CD4-positive, alpha-beta memory T cell (primary cell): ENCODE measurements at regions of chr14 and their contacts with region 1.

Region 1: GRCh38 chr14:75906676-75907280 is 75.0 kb downstream of the TGFB3 start:
- DNase-seq: peak; percentile 48 to 64 (median 54)
- H3K4me3 ChIP-seq: no peak overlapping the region
- H3K4me3 Mint-ChIP-seq: no peak overlapping the region
- H3K27ac ChIP-seq: no peak overlapping the region
- H3K27ac Mint-ChIP-seq: peak overlapping the region in 2 of 7 donors; percentile 3 to 15
- H3K4me1 ChIP-seq: no peaks in the 10 kb centered on the region
- H3K4me1 Mint-ChIP-seq: no peaks in the 10 kb centered on the region
- H3K27me3 ChIP-seq: no peaks in the 10 kb centered on the region
- H3K27me3 Mint-ChIP-seq: no peaks in the 10 kb centered on the region

Region 2: DNA sequence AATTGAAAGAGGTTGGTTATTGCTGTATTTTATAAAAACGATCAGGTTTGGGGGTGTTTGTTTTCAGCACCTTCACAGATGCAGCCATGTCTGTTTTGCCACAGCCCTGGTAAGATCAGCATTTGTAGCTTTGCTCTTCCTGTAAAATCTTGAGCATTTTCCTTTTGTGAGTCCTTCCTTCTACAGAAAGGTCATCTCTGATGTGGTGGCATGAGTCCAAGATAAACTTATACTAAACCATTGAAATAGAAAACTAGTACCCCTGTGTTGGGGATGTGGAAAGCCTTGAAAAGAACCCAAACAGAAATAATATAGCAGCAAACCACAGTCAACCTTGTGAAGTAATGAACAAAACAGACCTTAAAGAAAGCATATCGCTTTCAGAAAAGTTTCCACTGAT is 10.4 kb before region 1 on chr14:
- CTCF ChIA-PET with region 1: interaction called, 13 read pairs
- POLR2A ChIA-PET with region 1: no interaction called
- intact Hi-C with region 1: no loop called
- DNase-seq: no peak
- H3K4me3 ChIP-seq: no peak overlapping the region
- H3K4me3 Mint-ChIP-seq: no peak overlapping the region
- H3K27ac ChIP-seq: no peak overlapping the region
- H3K27ac Mint-ChIP-seq: peak overlapping the region in 2 of 7 donors; percentile 19 to 25
- H3K4me1 ChIP-seq: no peaks in the 10 kb centered on the region
- H3K4me1 Mint-ChIP-seq: peaks cover 0 to 4% (median 0%) of the 10 kb centered on the region in 4 donors
- H3K27me3 ChIP-seq: no peaks in the 10 kb centered on the region
- H3K27me3 Mint-ChIP-seq: no peaks in the 10 kb centered on the region

Region 3: DNA sequence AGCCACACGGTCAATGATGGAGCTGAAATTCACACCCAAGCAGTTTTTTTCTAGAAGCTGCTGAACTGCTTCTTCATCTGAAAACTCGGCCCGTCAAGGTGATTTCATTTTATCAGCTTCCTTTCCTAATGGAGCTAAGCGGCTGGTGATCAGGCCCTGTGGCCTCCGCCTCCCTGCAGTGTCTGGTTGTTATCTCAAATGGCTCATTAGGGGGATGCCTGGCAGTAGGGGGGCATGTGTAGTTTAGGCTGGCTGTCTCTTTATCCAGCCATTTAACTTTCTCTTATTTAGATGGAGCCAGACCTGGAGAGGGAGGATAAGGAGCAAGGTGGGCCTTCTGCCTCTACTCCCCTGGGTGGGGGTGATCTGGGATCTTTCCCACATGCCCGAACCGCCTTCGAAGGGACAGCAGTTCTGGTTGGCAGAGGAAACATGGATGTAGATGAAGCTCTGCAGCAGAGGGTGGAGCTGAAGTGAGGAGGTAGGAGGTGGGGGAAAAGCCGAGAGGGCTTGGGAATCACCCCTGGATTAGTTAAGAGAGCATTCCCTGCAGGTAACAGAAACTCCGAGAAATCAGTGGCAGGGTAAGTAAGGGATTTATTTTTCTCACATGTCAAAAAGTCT is 10.7 kb after region 1 on chr14:
- CTCF ChIA-PET with region 1: interaction called, 25 read pairs
- POLR2A ChIA-PET with region 1: no interaction called
- intact Hi-C with region 1: no loop called
- DNase-seq: no peak
- H3K4me3 ChIP-seq: no peak overlapping the region
- H3K4me3 Mint-ChIP-seq: no peak overlapping the region
- H3K27ac ChIP-seq: no peak overlapping the region
- H3K27ac Mint-ChIP-seq: no peak overlapping the region
- H3K4me1 ChIP-seq: no peaks in the 10 kb centered on the region
- H3K4me1 Mint-ChIP-seq: no peaks in the 10 kb centered on the region
- H3K27me3 ChIP-seq: no peaks in the 10 kb centered on the region
- H3K27me3 Mint-ChIP-seq: no peaks in the 10 kb centered on the region

Region 4: DNA sequence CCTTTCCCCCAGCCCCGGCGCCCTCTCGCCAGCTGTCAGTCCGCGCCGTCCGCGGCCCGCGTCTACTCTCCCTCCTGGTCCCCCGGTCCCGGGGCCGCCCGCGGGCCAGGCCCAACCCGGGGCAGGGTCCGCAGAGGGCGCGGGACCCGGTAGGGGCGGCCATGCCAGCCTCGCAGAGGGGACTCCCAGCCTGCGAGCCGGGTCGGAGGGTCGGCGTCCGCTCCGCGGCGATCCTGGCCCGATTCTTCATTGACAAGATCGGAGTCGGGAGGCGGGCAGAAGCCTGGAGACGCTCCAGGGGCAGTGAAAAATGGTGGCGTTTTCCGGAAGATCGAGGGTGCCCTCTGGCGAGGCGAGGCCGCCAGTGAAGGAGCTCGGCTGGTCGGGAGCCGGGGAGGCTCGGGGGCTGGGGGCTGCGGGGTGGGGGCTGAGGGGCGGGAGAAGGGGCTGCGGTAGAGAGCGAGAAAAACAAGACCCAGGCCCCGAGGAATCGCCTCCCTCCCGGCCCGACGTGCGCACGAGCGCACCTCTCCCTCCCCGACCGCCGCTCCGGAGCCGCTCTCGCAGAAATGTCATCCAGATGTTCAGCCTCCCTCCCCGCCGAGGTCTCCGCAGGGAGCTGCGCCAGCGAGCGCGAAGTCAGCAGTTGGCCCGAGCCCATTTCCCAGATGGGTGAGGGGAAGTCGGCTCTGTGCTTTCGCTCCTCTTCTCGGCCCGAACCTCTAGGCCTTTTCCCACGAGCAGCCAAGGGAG is 75.7 kb after region 1 on chr14:
- CTCF ChIA-PET with region 1: interaction called, 181 read pairs
- POLR2A ChIA-PET with region 1: interaction called, 13 read pairs
- intact Hi-C with region 1: no loop called
- DNase-seq: peak; percentile 79 to 82 (median 80)
- H3K4me3 ChIP-seq: peak overlapping the region; percentile 29 to 72
- H3K4me3 Mint-ChIP-seq: peak overlapping the region; percentile 78 to 93 (median 89)
- H3K27ac ChIP-seq: peak overlapping the region; percentile 71
- H3K27ac Mint-ChIP-seq: peak overlapping the region; percentile 78 to 95 (median 93)
- H3K4me1 ChIP-seq: peaks cover 44% of the 10 kb centered on the region
- H3K4me1 Mint-ChIP-seq: peaks cover 27 to 68% (median 50%) of the 10 kb centered on the region in 4 donors
- H3K27me3 ChIP-seq: no peaks in the 10 kb centered on the region
- H3K27me3 Mint-ChIP-seq: no peaks in the 10 kb centered on the region

Region 5: DNA sequence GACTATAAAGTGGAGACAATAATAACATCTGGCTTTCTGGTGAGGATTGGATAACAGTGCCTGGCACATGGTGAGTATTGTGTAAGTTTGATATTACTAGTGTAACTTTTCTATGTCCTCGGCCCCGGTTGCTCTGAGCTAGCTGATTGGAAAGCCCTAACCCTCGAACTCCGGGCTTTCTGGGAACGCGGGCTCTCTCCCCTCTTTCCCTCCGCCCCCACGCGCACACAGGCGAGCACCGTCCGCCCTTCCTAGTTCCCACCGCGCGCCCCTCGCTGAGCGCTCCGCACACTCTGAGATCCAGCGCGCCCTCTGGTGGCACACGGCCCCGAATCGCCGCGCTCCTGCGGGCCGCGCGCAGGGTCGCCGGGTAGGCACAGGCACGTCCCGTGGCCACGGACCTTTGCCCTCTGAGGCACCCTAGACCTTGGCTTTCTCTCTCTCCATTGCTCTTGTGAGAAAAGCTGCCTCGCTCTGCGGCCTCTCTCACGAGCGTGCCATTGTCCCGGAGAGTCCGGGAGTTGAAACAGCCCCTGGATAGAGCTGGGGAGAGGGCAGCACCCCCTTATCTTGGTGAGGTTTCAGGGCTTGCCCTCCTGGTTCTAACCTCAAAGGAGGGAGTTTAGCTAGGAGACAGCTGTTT is 446.0 kb after region 1 on chr14:
- CTCF ChIA-PET with region 1: interaction called, 4 read pairs
- POLR2A ChIA-PET with region 1: no interaction called
- intact Hi-C with region 1: loop called (anchors 2 kb)
- DNase-seq: peak in 4 of 5 donors; percentile 13 to 41 (median 28)
- H3K4me3 ChIP-seq: no peak overlapping the region
- H3K4me3 Mint-ChIP-seq: peak overlapping the region in 3 of 8 donors; percentile 51 to 66 (median 57)
- H3K27ac ChIP-seq: no peak overlapping the region
- H3K27ac Mint-ChIP-seq: no peak overlapping the region
- H3K4me1 ChIP-seq: peaks cover 5% of the 10 kb centered on the region
- H3K4me1 Mint-ChIP-seq: peaks cover 0 to 14% (median 4%) of the 10 kb centered on the region in 4 donors
- H3K27me3 ChIP-seq: no peaks in the 10 kb centered on the region
- H3K27me3 Mint-ChIP-seq: peaks cover 20 to 37% of the 10 kb centered on the region in 2 donors